ENCODE measurements at regions of chr5 and their contacts with region 1.

Region 1: DNA sequence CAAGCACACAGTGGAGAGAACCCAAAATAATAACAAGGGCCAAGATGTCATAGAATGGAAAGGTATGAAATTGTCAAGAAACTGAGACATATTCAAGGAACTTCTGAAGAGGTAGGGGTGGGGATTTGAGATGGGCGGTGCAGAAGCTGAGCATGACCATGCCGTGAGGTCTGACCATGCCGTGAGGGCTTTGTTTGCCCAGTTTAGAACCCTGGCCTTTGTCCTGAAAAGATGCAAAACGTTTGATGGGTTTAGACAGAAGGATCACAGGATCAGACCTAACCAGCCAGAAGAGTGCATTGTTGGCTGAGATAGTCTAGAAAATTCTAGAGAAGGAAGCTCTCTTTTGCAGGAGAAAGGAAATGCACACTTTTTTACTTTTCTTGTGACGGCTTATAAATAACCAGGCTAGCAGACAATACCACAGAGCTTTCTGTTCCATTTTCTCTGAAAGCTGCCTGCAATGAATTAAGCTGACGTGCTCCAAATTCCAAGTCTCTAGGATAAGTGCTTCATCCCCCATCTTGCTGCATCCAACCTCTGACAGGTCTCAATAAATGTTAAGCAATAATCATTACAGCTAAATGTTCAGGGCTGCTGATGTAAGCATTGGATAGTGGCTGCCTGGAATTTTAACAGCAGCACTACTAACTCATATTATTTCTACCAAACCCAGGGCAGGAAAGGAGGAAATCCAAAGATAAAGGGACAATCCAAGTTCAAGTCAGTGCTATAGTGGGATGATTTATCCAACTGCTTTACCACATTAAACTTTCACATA is 110.9 kb upstream of the IL6ST start:
- DNase-seq: no peak
- H3K4me3 Mint-ChIP-seq: peak overlapping the region; percentile 58
- H3K27ac Mint-ChIP-seq: peak overlapping the region; percentile 91
- H3K4me1 Mint-ChIP-seq: peaks cover 76% of the 10 kb centered on the region
- H3K27me3 Mint-ChIP-seq: no peaks in the 10 kb centered on the region

Region 2: DNA sequence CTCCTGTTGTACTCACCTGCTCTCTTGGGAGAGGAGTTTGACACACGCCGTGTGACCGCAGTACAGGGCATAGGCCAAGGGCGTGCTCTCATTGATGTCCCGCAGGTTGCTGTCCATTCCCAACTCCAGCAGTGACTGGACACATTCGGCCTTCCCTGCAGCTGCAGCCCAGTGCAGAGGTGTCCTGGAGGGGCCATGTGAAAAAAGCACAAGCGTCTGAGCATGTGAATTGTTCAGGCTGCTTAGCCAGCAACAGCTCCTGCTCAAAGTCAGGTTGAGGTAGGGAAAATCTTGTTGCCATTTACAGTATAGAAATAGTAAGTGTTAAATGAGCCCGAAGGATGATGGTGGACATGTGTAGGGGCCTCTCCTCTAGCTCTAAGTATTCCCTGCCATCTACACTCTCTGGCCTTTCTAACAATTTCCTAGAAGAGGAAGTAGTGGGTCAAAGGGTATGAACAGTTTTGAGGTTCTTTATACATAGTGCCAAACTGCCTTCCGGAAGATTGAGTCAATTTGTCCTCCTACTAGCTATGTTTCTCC is 11.0 kb after region 1 on chr5:
- CTCF ChIA-PET with region 1: no interaction called
- intact Hi-C with region 1: loop called (anchors 1 kb)
- DNase-seq: no peak
- H3K4me3 Mint-ChIP-seq: no peak overlapping the region
- H3K27ac Mint-ChIP-seq: peak overlapping the region; percentile 63
- H3K4me1 Mint-ChIP-seq: peaks cover 14% of the 10 kb centered on the region
- H3K27me3 Mint-ChIP-seq: no peaks in the 10 kb centered on the region

Region 3: GRCh38 chr5:56126487-56127179 is 20.9 kb after region 1 on chr5:
- CTCF ChIA-PET with region 1: interaction called, 5 read pairs
- intact Hi-C with region 1: loop called (anchors 1 kb)
- DNase-seq: peak; percentile 83
- H3K4me3 Mint-ChIP-seq: peak overlapping the region; percentile 74
- H3K27ac Mint-ChIP-seq: peak overlapping the region; percentile 97
- H3K4me1 Mint-ChIP-seq: peaks cover 75% of the 10 kb centered on the region
- H3K27me3 Mint-ChIP-seq: no peaks in the 10 kb centered on the region

Region 4: GRCh38 chr5:56155992-56156584 is 50.4 kb after region 1 on chr5:
- CTCF ChIA-PET with region 1: interaction called, 3 read pairs
- intact Hi-C with region 1: loop called (anchors 1 kb)
- DNase-seq: no peak
- H3K4me3 Mint-ChIP-seq: peak overlapping the region; percentile 79
- H3K27ac Mint-ChIP-seq: peak overlapping the region; percentile 91
- H3K4me1 Mint-ChIP-seq: peaks cover 88% of the 10 kb centered on the region
- H3K27me3 Mint-ChIP-seq: no peaks in the 10 kb centered on the region

Region 5: GRCh38 chr5:56279979-56280378 is 174.3 kb after region 1 on chr5:
- CTCF ChIA-PET with region 1: no interaction called
- intact Hi-C with region 1: no loop called
- DNase-seq: no peak
- H3K4me3 Mint-ChIP-seq: no peak overlapping the region
- H3K27ac Mint-ChIP-seq: no peak overlapping the region
- H3K4me1 Mint-ChIP-seq: no peaks in the 10 kb centered on the region
- H3K27me3 Mint-ChIP-seq: no peaks in the 10 kb centered on the region